Tibial artery (tissue), 4 donors: ENCODE measurements at regions of chr4 and their contacts with region 1.

Region 1: DNA sequence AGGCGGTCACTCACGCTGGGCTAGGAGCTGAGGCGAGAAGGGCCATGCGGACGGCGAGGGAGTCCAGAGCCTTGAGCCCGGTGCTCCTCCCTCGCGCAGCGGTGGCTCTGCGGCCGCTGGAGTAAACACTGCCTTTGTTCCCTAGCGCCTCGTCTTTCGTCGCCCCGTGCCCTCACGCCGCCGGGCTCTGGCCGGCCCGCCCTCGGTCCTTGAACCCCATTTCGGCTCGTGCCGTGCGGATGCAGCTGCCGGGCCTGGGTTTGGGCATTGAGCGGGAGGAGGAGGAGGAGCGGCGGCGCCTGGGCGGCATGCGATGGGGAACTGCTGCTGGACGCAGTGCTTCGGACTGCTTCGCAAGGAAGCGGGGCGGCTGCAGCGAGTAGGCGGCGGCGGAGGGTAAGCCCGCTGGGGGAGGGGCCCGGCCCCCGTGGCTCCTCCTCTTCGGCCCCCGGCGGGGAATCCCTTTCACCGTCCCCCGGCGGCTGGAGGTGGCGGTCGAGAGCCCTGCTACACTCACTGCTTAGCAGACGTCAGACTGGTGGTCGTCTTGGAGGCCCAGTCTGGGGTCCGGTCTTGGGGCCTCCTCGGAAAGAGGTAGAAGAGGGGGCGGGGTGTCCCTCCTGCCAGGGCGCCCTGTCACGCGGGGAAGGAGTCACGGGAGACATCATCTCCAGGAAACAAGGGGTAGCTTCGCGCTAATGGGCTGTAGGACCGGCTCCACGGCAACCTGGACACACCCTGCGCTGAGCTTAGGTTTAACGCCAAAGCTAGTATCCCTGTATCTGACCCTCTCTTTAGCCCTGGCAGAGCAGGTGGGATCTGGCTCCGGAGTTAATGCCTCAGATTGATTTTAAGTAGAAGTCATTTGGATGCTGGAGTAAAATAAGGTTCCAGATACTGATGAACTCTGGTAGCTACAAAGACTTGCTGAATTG is at the start of gene AP1AR:
- DNase-seq: peak; percentile 79 to 89
- H3K4me3 ChIP-seq: peak within 1 kb of the TSS; percentile 91 to 92
- H3K27ac ChIP-seq: peak within 1 kb of the TSS; percentile 96 to 97
- H3K4me1 ChIP-seq: peaks cover 0 to 22% (median 4%) of the 10 kb centered on the region in 4 donors
- H3K27me3 ChIP-seq: no peaks in the 10 kb centered on the region
- CTCF ChIP-seq: peak in 1 of 2 experiments; percentile 36

Region 2: DNA sequence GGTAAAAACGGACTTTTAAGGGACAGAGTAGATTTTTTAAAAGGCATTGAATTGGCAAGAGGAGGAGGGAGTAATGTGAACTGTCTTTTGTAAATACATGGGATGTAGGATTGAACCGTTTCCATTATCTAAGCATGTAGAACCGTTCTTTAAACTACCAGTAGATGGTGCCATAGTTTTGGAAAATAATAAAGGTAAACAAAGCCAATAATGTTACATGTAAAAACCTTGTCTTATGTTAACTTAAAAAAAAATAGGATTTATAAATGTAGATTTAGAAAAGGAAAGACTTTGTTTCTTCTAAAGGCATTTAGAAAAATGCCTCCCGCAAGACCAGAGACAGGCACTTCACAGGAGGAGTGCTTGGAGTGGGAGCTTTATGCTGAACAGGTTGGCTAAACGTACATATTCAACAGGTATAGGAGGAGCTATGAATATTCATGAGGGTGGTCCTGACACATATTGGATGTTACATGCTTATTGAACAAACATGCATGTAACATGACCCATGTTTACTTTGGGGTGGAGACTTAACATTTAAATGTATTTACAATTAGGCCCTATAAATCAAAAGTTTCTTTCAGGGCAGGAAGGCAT is 132.2 kb before region 1 on chr4:
- intact Hi-C with region 1: loop called (anchors 2 kb)
- DNase-seq: no peak
- H3K4me3 ChIP-seq: no peak overlapping the region
- H3K27ac ChIP-seq: no peak overlapping the region
- H3K4me1 ChIP-seq: no peaks in the 10 kb centered on the region
- H3K27me3 ChIP-seq: no peaks in the 10 kb centered on the region
- CTCF ChIP-seq: peak; percentile 57 to 70

Region 3: DNA sequence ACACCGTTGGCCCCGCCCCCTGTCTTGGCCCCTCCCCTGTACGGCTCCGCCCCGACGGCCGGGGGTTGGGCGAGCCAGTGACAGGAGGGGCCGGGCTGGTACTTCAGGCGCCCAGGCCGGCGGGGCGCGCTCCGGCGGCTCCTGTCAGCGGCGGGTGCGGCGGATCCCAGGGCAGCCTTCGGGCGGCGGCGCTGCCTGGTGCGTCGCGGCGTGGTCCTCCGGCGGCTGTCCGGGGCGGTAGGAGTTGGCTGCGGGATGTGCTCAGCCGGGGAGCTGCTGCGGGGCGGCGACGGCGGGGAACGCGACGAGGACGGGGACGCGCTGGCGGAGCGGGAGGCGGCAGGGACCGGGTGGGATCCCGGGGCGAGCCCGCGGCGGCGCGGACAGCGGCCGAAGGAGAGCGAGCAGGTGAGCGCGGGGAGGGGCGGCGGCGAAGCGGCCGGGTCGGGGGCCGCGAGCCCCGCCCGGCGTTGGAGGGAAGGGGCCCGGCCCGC is 86.7 kb before region 1 on chr4 and contains the start of gene FAM241A:
- intact Hi-C with region 1: loop called (anchors 2 kb)
- DNase-seq: peak; percentile 88 to 92
- H3K4me3 ChIP-seq: peak within 1 kb of the TSS; percentile 76 to 87
- H3K27ac ChIP-seq: peak within 1 kb of the TSS; percentile 76 to 90
- H3K4me1 ChIP-seq: peaks cover 0 to 24% (median 5%) of the 10 kb centered on the region in 4 donors
- H3K27me3 ChIP-seq: no peaks in the 10 kb centered on the region
- CTCF ChIP-seq: no peak

Region 4: DNA sequence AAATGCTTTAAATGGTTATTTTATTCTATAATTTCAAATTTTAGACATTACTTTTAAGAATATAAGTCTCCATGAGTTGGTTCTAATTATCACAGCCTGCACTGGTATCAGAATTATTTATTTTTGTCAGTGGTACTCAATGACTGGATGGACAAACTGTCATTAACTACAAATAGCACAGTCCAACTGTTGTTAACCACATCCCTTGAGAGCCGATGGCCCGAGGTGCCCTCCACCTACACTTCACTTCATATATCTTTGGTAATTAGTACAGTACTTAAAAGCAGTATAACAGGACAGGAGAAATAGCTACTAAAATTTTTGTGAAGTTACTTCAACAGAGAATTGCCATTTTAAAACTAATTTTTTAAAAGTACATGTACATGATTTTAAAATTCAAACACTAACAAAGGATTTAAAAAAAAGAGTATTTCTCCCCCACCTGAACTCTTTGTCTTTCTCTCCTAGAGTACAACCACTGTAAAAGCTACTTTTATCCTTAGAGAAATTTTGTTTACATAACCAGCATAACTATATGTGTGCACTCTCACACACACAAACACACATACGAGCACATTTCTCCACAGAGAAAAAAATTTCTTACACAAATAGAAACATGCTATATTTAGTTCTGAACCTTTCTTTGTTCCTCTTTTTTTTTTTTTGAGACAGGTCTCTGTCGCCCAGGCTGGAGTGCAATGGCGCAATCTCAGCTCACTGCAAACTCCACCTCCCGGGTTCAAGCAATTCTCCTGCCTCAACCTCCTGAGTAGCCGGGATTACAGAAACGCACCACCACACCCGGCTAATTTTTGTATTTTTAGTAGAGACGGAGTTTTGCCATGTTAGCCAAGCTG is 47.2 kb after region 1 on chr4:
- intact Hi-C with region 1: no loop called
- DNase-seq: no peak
- H3K4me3 ChIP-seq: no peak overlapping the region
- H3K27ac ChIP-seq: no peak overlapping the region
- H3K4me1 ChIP-seq: peaks cover 0 to 21% (median 10%) of the 10 kb centered on the region in 4 donors
- H3K27me3 ChIP-seq: no peaks in the 10 kb centered on the region
- CTCF ChIP-seq: no peak